ENCODE measurements at regions of chr15 and their contacts with region 1.

Region 1: DNA sequence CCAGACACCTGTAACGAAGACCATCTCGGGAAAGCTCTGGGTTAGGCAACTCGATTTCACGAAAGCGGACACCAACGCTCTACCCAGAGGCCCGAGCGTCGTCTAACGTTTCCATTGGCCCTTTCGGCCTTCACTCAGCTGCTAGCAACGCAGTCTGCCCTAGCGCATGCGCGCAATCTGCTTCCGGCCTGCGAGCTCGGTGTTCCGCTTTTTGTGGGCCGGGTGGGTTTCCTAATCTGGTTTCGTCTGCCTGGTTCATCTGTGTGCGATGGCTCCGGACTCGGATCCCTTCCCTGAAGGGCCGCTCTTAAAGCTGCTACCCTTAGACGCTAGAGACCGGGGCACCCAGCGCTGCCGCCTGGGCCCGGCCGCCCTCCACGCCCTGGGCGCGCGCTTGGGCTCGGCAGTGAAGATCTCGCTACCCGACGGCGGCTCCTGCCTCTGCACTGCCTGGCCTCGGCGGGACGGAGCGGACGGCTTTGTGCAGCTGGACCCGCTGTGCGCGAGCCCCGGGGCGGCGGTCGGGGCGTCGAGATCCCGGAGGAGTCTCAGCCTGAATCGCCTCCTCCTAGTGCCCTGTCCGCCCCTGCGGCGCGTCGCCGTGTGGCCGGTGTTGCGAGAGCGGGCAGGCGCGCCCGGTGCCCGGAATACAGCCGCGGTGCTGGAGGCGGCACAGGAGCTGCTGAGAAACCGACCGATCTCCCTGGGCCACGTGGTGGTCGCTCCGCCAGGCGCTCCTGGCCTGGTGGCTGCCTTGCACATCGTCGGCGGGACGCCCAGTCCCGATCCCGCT is 24.0 kb upstream of the GATM start:
- DNase-seq: peak; percentile 98 to 100 (median 99)
- H3K4me3 ChIP-seq: peak overlapping the region; percentile 75 to 97 (median 90)
- H3K27ac ChIP-seq: peak overlapping the region; percentile 77 to 88
- H3K4me1 ChIP-seq: peaks cover 9 to 33% (median 23%) of the 10 kb centered on the region in 4 experiments
- H3K27me3 ChIP-seq: no peaks in the 10 kb centered on the region

Region 2: DNA sequence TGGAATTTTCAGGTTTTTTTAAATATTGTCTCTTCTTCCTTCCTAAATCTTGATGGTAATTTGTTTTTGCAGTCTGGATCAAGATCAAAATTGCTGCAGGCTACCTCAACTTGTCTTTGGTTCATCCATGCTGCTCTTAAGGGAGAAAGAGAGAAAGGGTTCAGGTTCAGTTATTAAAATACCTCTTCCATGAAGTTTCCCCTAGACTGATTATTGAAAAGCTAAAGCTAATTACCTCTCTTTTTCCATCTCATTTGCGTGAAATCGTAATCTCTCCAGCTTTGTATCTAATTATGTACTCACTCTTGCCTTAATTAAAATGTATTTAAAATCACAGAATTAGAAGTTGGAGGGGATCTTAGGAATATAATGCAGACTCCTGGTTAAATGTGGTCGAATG is 97.6 kb before region 1 on chr15:
- CTCF ChIA-PET with region 1: interaction called, 14 read pairs
- POLR2A ChIA-PET with region 1: no interaction called
- DNase-seq: no peak
- H3K4me3 ChIP-seq: no peak overlapping the region
- H3K27ac ChIP-seq: no peak overlapping the region
- H3K4me1 ChIP-seq: peaks cover 0 to 6% (median 0%) of the 10 kb centered on the region in 4 experiments
- H3K27me3 ChIP-seq: peaks cover 0 to 7% (median 2%) of the 10 kb centered on the region in 5 experiments

Region 3: DNA sequence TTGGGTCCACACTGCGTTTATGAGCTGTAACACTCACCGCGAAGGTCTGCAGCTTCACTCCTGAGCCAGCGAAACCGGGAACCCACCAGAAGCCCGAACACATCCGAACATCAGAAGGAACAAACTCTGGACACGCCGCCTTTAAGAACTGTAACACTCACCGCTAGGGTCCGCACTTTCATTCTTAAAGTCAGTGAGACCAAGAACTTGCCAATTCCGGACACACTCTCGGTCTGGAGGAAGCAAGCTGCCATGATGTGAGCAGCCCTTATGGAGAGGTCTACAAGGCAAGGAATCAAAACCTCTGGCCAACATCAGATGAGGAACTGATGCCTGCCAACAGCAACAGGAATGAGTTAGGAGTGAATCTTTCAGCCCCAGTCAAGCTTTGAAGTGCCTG is 87.4 kb before region 1 on chr15:
- CTCF ChIA-PET with region 1: interaction called, 13 read pairs
- POLR2A ChIA-PET with region 1: no interaction called
- DNase-seq: peak; percentile 10 to 53 (median 44)
- H3K4me3 ChIP-seq: no peak overlapping the region
- H3K27ac ChIP-seq: no peak overlapping the region
- H3K4me1 ChIP-seq: no peaks in the 10 kb centered on the region
- H3K27me3 ChIP-seq: no peaks in the 10 kb centered on the region

Region 4: GRCh38 chr15:45338417-45338816 is 63.9 kb before region 1 on chr15:
- CTCF ChIA-PET with region 1: no interaction called
- POLR2A ChIA-PET with region 1: no interaction called
- DNase-seq: peak; percentile 29 to 84 (median 66)
- H3K4me3 ChIP-seq: no peak overlapping the region
- H3K27ac ChIP-seq: no peak overlapping the region
- H3K4me1 ChIP-seq: peaks cover 3 to 10% (median 8%) of the 10 kb centered on the region in 4 experiments
- H3K27me3 ChIP-seq: no peaks in the 10 kb centered on the region

Region 5: GRCh38 chr15:45391746-45392583 is 10.4 kb before region 1 on chr15:
- CTCF ChIA-PET with region 1: interaction called, 13 read pairs
- POLR2A ChIA-PET with region 1: interaction called, 8 read pairs
- DNase-seq: peak; percentile 32 to 86 (median 84)
- H3K4me3 ChIP-seq: no peak overlapping the region
- H3K27ac ChIP-seq: no peak overlapping the region
- H3K4me1 ChIP-seq: peaks cover 0 to 9% (median 3%) of the 10 kb centered on the region in 4 experiments
- H3K27me3 ChIP-seq: no peaks in the 10 kb centered on the region